Activated naive CD4-positive, alpha-beta T cell treated with anti-CD3 and anti-CD28 coated beads, Interleukin-2, amount 10 ng/mL, durations not matched to agents 7 days and 5 days (primary cell): ENCODE measurements at regions of chr11 and their contacts with region 1.

Region 1: DNA sequence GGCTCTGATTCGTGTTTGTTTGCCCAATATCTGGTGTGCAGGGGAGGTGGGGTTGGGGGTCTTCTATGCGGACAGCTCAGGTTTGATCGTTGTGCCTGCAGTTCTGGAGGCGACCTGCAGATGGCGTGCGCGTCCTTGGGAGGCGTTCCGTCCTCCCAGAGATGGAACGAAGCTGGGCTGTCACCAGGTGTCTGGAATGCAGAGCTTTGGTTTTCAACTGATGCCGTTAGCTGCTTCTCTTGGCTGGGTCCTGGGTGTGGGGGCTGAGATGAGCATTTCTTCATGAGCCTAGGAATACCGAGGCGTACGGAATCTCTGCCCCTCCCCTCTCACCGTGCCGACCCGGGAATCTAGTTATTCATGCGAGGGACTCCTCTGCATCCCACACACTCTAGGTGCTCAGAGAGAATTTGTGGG is 98.6 kb downstream of the CEP164 start:
- DNase-seq: peak; percentile 75
- H3K4me3 Mint-ChIP-seq: no peak overlapping the region
- H3K27ac Mint-ChIP-seq: no peak overlapping the region
- H3K4me1 Mint-ChIP-seq: no peaks in the 10 kb centered on the region
- H3K27me3 Mint-ChIP-seq: peaks cover 18% of the 10 kb centered on the region

Region 2: DNA sequence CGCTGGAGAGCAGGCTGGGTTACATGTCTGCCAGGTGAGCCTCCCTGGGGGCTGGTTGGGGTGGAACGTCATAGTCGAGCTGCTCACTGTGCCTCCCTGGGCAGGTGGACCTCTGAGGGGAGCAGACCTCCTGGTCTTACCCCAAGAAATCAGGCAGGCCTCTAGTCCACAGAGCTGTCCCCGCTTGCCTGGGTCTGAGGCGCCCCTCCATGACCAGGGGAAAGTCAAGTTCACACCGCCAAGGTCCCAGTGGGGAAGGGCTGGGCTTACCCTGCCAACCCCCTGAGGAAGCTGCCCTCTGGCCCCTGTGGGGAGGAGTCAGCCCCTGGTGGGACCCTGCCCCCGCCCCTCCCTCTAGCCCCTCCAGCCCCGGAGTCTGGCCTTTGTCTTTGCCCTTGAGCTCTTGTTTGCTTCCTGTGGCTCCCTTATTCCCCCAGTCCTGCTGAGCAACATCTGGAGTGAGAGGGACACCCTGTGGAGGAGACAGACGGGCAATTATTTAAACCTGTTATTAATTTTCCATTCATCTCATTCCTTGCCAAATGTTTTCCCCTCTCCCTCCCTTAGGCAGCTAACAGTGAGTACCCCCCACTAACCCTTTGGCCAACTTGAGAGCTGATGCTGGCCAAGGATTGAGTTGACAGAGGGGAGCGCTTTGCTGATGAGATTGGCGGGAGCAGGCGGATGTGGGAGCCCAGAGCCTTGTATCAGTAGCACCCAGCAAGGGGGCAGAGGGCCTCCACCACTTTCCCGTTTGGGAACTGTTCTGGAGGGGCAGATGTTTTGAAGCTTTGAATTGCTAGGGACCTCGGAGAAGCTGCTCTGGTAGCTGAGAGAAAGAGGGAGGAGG is 15.2 kb before region 1 on chr11:
- CTCF ChIA-PET with region 1: interaction called, 13 read pairs
- DNase-seq: no peak
- H3K4me3 Mint-ChIP-seq: no peak overlapping the region
- H3K27ac Mint-ChIP-seq: no peak overlapping the region
- H3K4me1 Mint-ChIP-seq: no peaks in the 10 kb centered on the region
- H3K27me3 Mint-ChIP-seq: peaks cover 4% of the 10 kb centered on the region

Region 3: DNA sequence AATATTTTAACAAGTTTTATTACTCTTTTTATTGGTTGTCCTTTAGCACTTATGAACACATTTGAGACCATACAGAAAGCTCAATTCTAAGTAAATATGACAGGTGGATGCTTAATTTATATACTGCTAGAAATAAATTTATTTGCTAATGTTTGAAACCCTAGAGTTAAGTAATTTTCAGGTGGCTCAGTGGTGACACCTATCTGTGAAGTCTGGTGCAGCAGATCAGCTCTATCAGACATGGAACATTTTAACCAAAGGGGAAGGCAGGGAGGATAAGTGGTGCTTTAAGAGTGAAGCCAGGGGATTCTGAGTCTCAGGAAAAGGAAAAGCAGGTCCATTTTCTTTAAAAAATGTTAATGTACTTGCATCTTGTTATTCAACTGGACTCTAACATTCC is 194.9 kb after region 1 on chr11:
- CTCF ChIA-PET with region 1: interaction called, 50 read pairs
- DNase-seq: peak; percentile 35
- H3K4me3 Mint-ChIP-seq: no peak overlapping the region
- H3K27ac Mint-ChIP-seq: no peak overlapping the region
- H3K4me1 Mint-ChIP-seq: no peaks in the 10 kb centered on the region
- H3K27me3 Mint-ChIP-seq: peaks cover 17% of the 10 kb centered on the region

Region 4: DNA sequence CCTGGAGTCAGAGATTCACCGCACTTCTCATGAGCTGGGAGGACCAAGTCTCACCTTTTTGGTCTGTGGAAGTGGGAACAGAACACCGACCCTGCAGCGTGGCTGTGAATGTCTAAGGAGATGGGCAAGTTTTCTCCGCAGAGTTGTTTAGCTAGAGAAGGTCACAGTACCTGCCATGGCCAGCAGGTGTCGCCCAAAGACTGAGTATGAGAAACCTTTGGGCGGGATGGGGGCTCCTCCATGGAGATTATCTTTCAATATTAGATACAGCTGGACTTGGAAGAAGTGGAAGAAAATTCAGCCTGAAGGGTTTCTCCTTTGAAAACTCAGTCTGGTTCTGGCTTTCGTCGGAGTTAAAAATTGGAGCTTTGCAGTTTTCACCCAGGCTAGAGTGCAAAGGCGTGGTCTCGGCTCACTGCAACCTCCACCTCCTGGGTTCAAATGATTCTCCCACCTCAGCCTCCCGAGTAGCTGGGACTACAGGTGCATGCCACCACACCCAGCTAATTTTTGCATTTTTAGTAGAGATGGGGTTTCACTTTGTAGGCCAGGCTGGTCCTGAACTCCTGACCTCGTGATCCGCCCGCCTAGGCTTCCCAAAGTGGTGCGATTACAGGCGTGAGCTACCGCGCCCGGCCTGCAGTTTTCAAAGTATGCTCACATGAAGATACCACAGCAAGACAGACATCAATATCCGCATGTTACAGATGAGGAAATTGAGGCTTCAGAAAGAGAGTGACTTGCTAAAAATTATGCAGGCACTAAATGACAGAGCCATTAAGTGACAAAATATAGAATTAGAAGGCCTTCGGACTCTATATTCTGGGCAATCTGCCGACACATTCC is 381.4 kb after region 1 on chr11:
- CTCF ChIA-PET with region 1: interaction called, 40 read pairs
- DNase-seq: peak; percentile 83
- H3K4me3 Mint-ChIP-seq: no peak overlapping the region
- H3K27ac Mint-ChIP-seq: no peak overlapping the region
- H3K4me1 Mint-ChIP-seq: peaks cover 9% of the 10 kb centered on the region
- H3K27me3 Mint-ChIP-seq: peaks cover 53% of the 10 kb centered on the region

Region 5: DNA sequence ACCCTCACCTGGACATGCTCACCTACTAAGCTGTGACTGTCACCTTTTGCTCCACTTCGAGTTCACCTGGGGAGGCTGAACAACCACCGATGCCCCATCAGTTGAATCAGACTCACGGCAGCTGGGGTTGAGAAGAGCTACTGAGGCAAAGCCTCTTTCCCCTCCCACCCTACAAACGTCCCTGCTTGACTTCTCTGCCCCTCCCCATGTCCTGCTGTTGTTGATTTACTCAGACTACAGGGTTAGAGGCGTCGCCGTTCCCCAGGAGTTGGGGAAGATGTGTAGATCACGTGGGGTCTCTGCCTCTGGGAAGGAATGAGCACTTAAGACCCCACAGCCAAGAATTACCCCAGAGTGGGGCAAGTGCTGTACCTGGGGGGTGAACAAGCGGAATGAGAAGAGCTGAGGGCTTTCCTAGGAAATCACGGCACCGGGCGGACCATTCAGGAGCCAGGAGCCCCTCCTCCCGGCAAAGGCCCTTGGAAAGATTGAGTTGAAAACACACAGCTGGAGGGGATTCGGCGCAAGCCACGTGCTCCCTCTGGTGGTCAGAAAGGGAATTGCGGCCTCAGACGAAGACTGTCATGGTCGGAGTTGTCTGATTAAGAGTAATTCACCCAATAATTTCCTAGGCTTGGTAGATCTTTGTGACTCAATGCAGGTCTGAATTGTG is 391.2 kb after region 1 on chr11:
- CTCF ChIA-PET with region 1: interaction called, 44 read pairs
- DNase-seq: peak; percentile 88
- H3K4me3 Mint-ChIP-seq: no peak overlapping the region
- H3K27ac Mint-ChIP-seq: peak overlapping the region; percentile 80
- H3K4me1 Mint-ChIP-seq: peaks cover 54% of the 10 kb centered on the region
- H3K27me3 Mint-ChIP-seq: peaks cover 4% of the 10 kb centered on the region